Common myeloid progenitor, CD34-positive (primary cell): ENCODE measurements at regions of chr5 and their contacts with region 1.

Region 1: GRCh38 chr5:32489791-32490582 is 45.4 kb upstream of the ZFR start:
- DNase-seq: peak; percentile 68 to 81 (median 74)
- H3K4me3 ChIP-seq: no peak overlapping the region
- H3K27ac ChIP-seq: no peak overlapping the region
- H3K4me1 ChIP-seq: no peaks in the 10 kb centered on the region
- H3K27me3 ChIP-seq: no peaks in the 10 kb centered on the region

Region 2: DNA sequence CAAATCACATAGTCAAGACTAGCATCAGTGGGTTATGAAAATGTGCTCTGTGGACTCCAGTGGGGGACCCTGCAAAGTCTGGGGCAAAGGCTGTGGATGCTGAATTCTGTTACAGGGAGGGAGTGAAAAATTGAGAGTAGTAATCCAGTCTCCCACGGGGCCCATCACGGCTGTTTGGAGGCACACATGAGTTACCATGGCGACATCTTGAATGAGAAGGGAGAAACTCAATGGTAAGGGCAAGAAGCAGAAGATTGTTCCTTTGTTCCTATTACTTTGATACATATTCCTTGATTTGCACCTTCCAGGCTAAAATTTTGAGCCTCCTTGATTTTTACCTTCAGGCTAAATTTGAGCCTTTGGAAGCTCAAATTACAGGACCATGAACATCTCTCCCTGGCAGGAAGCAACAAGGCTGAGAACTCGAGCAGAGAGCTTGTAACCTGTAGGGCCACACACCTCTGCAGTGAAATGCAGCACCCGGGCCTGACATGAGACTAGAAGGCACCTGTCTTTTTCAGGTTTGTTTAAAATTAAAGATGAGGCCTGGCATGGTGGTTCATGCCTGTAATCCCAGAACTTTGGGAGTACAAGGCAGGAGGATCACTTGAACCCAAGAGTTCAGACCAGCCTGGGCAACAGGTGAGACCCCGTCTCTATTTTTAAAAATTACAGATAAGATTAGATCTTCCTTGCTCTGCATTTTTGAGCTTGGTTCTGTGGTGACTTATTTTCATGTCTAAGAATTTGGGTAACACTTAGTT is 14.5 kb before region 1 on chr5:
- CTCF ChIA-PET with region 1: interaction called, 15 read pairs
- POLR2A ChIA-PET with region 1: no interaction called
- DNase-seq: no peak
- H3K4me3 ChIP-seq: no peak overlapping the region
- H3K27ac ChIP-seq: no peak overlapping the region
- H3K4me1 ChIP-seq: no peaks in the 10 kb centered on the region
- H3K27me3 ChIP-seq: no peaks in the 10 kb centered on the region

Region 3: GRCh38 chr5:32504989-32505596 is 15.1 kb after region 1 on chr5:
- CTCF ChIA-PET with region 1: interaction called, 38 read pairs
- POLR2A ChIA-PET with region 1: interaction called, 3 read pairs
- DNase-seq: peak; percentile 91 to 98 (median 97)
- H3K4me3 ChIP-seq: peak overlapping the region in 6 of 7 experiments; percentile 34 to 71 (median 50)
- H3K27ac ChIP-seq: peak overlapping the region; percentile 43 to 75
- H3K4me1 ChIP-seq: peaks cover 22 to 32% (median 31%) of the 10 kb centered on the region in 4 experiments
- H3K27me3 ChIP-seq: no peaks in the 10 kb centered on the region

Region 4: GRCh38 chr5:32613050-32613672 is 123.2 kb after region 1 on chr5:
- CTCF ChIA-PET with region 1: interaction called, 10 read pairs
- POLR2A ChIA-PET with region 1: no interaction called
- DNase-seq: peak; percentile 78 to 88 (median 85)
- H3K4me3 ChIP-seq: peak overlapping the region in 2 of 7 experiments; percentile 15 to 33
- H3K27ac ChIP-seq: no peak overlapping the region
- H3K4me1 ChIP-seq: peaks cover 0 to 3% (median 0%) of the 10 kb centered on the region in 4 experiments
- H3K27me3 ChIP-seq: no peaks in the 10 kb centered on the region

Region 5: DNA sequence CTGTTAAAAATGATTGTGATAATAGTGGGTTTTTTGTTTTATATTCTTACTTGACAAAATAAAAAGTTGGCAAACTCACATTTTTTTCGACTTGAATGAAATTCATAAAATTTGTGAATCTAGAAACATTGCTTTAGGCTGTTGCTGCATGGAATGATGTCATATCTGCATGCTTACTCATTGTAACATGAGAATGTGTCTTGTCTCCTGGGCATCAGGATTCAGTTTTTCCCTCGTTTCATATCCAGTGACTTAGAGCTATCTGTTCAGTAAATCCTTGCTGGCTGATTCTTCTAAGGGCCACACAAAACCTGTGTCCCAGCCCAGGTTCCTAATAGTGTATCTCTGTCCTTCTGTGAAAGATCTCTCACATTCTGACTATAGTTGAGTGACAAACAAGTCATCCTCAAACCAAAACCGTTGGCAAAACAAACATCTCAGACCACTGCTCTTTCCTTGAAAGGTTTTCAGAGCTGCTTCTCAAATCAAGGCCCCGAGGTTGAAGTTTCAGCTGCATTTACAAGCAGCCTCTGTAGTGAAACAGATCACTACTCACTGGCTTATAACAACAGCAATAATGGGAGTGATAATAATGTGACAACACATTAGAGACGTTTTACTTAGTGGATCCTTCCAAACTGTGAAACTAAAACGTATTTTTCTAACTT is 316.1 kb after region 1 on chr5:
- CTCF ChIA-PET with region 1: no interaction called
- POLR2A ChIA-PET with region 1: no interaction called
- DNase-seq: no peak
- H3K4me3 ChIP-seq: no peak overlapping the region
- H3K27ac ChIP-seq: no peak overlapping the region
- H3K4me1 ChIP-seq: no peaks in the 10 kb centered on the region
- H3K27me3 ChIP-seq: no peaks in the 10 kb centered on the region